Left cardiac atrium (tissue), 4 donors: ENCODE measurements at regions of chr6 and their contacts with region 1.

Region 1: GRCh38 chr6:82178077-82178758 is 69.3 kb downstream of the IBTK start:
- DNase-seq: no peak
- ATAC-seq: peak; percentile 65 to 76

Region 2: DNA sequence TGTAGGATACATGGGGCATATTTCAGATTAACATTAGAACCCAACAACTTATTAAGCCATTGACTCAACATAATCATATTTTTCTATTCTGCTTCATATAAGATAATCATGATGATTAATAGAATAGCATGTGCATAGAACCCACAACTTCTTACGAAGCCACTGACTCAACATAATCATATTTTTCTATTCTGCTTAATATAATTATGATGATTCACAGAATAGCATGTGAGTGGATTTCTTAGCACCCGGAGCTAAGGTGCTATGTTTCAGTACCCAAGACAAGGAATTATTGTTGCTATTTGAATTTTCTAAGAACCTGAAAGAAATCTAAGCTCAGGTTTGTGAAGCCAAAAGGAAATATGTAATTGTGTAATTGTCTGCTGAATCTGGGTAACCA is 522.5 kb before region 1 on chr6:
- intact Hi-C with region 1: no loop called
- DNase-seq: no peak
- ATAC-seq: no peak

Region 3: GRCh38 chr6:82080767-82081166 is 97.5 kb before region 1 on chr6:
- intact Hi-C with region 1: loop called (anchors 5 to 10 kb)
- DNase-seq: no peak
- ATAC-seq: no peak